Mammary epithelial cell (primary cell): ENCODE measurements at regions of chr9 and their contacts with region 1.

Region 1: GRCh38 chr9:18824095-18824666 is 208.8 kb downstream of the SAXO1 start:
- DNase-seq: peak; percentile 15
- H3K4me3 ChIP-seq: no peak overlapping the region
- H3K27ac ChIP-seq: no peak overlapping the region
- H3K4me1 ChIP-seq: no peaks in the 10 kb centered on the region
- H3K27me3 ChIP-seq: no peaks in the 10 kb centered on the region
- CTCF ChIP-seq: peak; percentile 54 to 68

Region 2: GRCh38 chr9:17810728-17811571 is 1013.2 kb before region 1 on chr9:
- CTCF ChIA-PET with region 1: interaction called, 4 read pairs
- dilution Hi-C with region 1: no loop called
- in situ Hi-C with region 1: no loop called
- intact Hi-C with region 1: loop called (anchors 10 kb)
- DNase-seq: peak; percentile 28
- H3K4me3 ChIP-seq: no peak overlapping the region
- H3K27ac ChIP-seq: no peak overlapping the region
- H3K4me1 ChIP-seq: no peaks in the 10 kb centered on the region
- H3K27me3 ChIP-seq: peaks cover 1% of the 10 kb centered on the region
- CTCF ChIP-seq: peak; percentile 72 to 85

Region 3: DNA sequence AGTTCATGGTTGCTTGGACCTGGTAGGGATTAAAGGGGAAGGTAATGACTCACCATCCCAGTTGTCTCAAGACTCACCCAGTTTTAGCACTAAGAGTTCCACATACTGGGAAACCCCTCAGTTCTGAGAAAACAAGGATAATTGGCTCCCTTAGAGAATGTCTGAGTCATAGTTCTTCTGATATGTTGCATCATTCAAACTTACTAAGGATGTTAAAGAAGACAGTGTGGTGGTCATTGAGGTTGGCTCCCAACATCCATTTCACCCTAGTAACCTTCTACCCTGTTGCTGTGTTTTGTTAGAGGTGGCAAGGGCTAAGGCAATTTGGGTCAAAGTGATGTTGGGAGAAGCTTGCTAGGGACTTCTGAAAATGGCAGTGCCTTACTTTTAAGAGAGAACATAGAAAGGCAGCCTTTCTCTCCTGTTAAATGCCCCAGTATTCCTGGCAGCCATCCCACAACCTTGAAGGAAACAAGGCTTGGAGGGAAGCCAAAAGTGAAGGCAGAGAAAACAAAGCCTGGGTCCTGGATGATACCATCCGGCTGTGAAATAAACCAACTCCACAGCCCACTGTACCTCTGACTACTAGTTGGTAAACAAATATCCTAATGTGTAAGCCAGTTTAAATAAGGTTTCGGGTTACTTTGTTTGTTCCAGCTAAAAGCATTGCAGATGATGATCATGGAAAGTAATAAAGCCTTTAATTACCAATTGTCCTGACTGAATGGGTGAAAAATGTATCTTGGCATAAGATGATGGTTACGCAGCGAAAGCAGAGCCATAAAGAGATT is 430.6 kb before region 1 on chr9:
- CTCF ChIA-PET with region 1: no interaction called
- dilution Hi-C with region 1: no loop called
- in situ Hi-C with region 1: no loop called
- intact Hi-C with region 1: loop called (anchors 2 kb)
- DNase-seq: peak; percentile 98
- H3K4me3 ChIP-seq: no peak overlapping the region
- H3K27ac ChIP-seq: peak overlapping the region; percentile 92
- H3K4me1 ChIP-seq: peaks cover 22% of the 10 kb centered on the region
- H3K27me3 ChIP-seq: no peaks in the 10 kb centered on the region
- CTCF ChIP-seq: no peak

Region 4: DNA sequence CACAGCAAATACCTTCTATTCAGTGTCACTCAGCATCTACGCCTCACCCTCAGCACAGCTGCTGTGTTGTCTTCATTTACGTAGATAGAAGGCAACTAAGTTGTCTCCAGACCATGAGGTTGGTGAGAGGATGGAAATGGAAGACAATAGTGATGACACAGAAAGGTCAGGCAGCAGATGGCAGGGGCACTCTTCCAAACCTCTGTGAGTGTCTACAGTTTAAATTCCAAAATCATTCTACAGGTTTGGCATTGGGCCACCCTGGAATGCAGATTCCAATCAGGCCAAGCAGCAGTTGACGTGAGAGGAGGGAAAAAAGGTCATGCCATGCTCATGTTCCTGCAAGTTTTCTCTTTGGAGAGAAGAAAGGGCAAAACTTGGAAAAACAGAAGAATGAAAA is 418.9 kb before region 1 on chr9:
- CTCF ChIA-PET with region 1: interaction called, 5 read pairs
- dilution Hi-C with region 1: no loop called
- in situ Hi-C with region 1: no loop called
- intact Hi-C with region 1: loop called (anchors 1 kb)
- DNase-seq: peak; percentile 57
- H3K4me3 ChIP-seq: no peak overlapping the region
- H3K27ac ChIP-seq: no peak overlapping the region
- H3K4me1 ChIP-seq: peaks cover 13% of the 10 kb centered on the region
- H3K27me3 ChIP-seq: no peaks in the 10 kb centered on the region
- CTCF ChIP-seq: peak; percentile 4 to 38

Region 5: GRCh38 chr9:19174127-19174912 is 350.1 kb after region 1 on chr9:
- CTCF ChIA-PET with region 1: no interaction called
- dilution Hi-C with region 1: no loop called
- in situ Hi-C with region 1: no loop called
- intact Hi-C with region 1: loop called (anchors 10 kb)
- DNase-seq: peak; percentile 78
- H3K4me3 ChIP-seq: no peak overlapping the region
- H3K27ac ChIP-seq: peak overlapping the region; percentile 31
- H3K4me1 ChIP-seq: no peaks in the 10 kb centered on the region
- H3K27me3 ChIP-seq: no peaks in the 10 kb centered on the region
- CTCF ChIP-seq: peak; percentile 32 to 61